Panc1 (cell line): ENCODE measurements at regions of chr20 and their contacts with region 1.

Region 1: GRCh38 chr20:8043687-8044282 is 24.2 kb upstream of the TMX4 start:
- DNase-seq: peak; percentile 42
- ATAC-seq: peak; percentile 81; the same call in 1 of the 2 replicates
- H3K4me3 ChIP-seq: no peak overlapping the region
- H3K27ac ChIP-seq: no peak overlapping the region
- H3K4me1 ChIP-seq: no peaks in the 10 kb centered on the region
- H3K27me3 ChIP-seq: no peaks in the 10 kb centered on the region; the same call in 1 of the 2 replicates
- CTCF ChIP-seq: peak; percentile 75; the same call in 1 of the 2 replicates

Region 2: GRCh38 chr20:6492271-6493055 is 1551.3 kb before region 1 on chr20:
- CTCF ChIA-PET with region 1: no interaction called
- POLR2A ChIA-PET with region 1: no interaction called
- in situ Hi-C with region 1: no loop called
- intact Hi-C with region 1: no loop called
- DNase-seq: no peak
- ATAC-seq: no peak
- H3K4me3 ChIP-seq: no peak overlapping the region
- H3K27ac ChIP-seq: no peak overlapping the region
- H3K4me1 ChIP-seq: no peaks in the 10 kb centered on the region
- H3K27me3 ChIP-seq: no peaks in the 10 kb centered on the region
- CTCF ChIP-seq: no peak

Region 3: DNA sequence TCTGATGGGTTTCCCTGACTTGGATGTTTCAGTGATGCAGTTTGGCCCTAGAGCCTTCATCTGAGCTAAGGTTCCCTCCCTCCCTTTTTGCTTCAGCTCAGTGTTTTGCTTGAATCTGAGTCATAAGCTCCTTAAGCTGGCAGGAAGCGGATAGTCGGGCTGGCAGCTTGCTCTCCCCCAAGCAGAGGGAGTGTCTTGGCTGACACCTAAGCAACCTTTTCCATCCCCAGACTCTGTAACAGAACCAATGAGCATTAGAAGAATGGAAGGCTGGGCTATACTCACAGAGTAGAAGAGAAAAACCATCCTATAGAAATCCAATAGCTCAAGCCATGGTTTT is 201.8 kb before region 1 on chr20:
- CTCF ChIA-PET with region 1: no interaction called
- POLR2A ChIA-PET with region 1: no interaction called
- in situ Hi-C with region 1: no loop called
- intact Hi-C with region 1: no loop called
- DNase-seq: peak; percentile 22
- ATAC-seq: peak; percentile 65; the same call in 1 of the 2 replicates
- H3K4me3 ChIP-seq: no peak overlapping the region
- H3K27ac ChIP-seq: no peak overlapping the region
- H3K4me1 ChIP-seq: no peaks in the 10 kb centered on the region
- H3K27me3 ChIP-seq: no peaks in the 10 kb centered on the region
- CTCF ChIP-seq: no peak

Region 4: DNA sequence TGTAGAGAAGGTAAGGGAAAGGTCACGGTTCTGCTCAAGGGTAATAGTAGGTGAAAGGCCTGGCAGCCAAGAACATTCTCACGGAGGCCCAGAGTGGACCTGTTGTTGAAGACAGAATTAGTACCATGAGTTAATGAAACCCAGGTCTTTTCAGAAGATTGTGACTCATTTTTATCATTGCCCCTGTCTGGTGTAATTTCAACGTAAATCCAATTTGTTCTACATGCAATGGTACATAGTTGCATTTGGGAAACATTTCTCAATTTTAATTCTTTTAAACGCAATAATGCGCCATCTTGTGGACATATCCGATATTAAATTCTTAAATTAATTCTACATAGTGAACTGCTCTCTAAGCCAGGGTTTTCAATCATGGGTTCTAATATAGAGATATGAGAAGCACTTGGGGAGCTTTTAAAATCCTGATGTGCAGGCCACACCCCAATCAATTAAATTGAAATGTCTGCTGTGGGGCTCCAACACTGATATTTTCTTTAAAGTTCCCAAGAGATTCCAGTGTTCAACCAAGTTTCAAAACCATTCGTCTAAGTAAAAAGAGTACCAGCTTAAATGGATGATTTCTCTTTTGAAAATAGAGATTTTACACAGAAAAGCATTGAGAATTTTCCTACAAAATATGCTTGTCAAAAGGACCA is 345.7 kb after region 1 on chr20:
- CTCF ChIA-PET with region 1: no interaction called
- POLR2A ChIA-PET with region 1: no interaction called
- in situ Hi-C with region 1: no loop called
- intact Hi-C with region 1: loop called (anchors 5 kb)
- DNase-seq: peak; percentile 1
- ATAC-seq: no peak
- H3K4me3 ChIP-seq: no peak overlapping the region
- H3K27ac ChIP-seq: no peak overlapping the region
- H3K4me1 ChIP-seq: no peaks in the 10 kb centered on the region
- H3K27me3 ChIP-seq: no peaks in the 10 kb centered on the region
- CTCF ChIP-seq: peak; percentile 58